ENCODE measurements at regions of chr3 and their contacts with region 1.

Region 1: DNA sequence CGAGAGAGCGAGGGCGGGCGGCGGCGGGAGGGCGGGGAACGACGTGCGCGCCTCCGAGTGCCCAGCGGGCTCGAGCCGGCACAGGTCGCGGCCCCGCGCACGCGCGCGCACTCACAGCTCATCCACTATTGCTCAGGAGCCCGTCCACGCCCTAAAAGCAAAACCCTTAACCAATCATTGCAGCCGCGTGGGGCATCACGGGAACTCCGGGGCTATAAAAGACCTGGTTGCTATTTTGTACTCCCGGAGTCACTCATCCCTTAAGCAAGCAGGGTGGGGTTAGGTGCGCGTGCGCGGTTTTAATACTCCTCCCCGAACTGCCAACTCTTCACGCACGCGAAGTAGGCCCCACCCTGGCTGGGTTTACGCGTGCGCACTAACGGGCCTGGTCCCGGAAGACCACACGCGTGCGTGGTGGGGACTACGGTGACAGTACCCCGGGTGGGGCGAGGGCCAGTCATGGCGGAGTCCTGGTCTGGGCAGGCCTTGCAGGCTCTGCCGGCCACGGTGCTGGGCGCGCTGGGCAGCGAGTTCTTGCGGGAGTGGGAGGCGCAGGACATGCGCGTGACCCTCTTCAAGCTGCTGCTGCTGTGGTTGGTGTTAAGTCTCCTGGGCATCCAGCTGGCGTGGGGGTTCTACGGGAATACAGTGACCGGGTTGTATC is at the starts of genes RHOA and TCTA:
- DNase-seq: peak; percentile 97 to 100 (median 100)
- H3K4me3 ChIP-seq: peak within 1 kb of the TSS; percentile 78 to 89
- H3K4me3 Mint-ChIP-seq: peak within 1 kb of the TSS; percentile 91 to 98 (median 94)
- H3K27ac ChIP-seq: peak within 1 kb of the TSS; percentile 93
- H3K27ac Mint-ChIP-seq: peak within 1 kb of the TSS; percentile 95 to 99 (median 97)
- H3K4me1 ChIP-seq: peaks cover 81% of the 10 kb centered on the region
- H3K4me1 Mint-ChIP-seq: peaks cover 51 to 82% (median 63%) of the 10 kb centered on the region in 4 donors
- H3K27me3 ChIP-seq: no peaks in the 10 kb centered on the region
- H3K27me3 Mint-ChIP-seq: no peaks in the 10 kb centered on the region
- total RNA-seq, gene RHOA: 246 to 269 TPM
- total RNA-seq, gene TCTA: 38.0 to 39.0 TPM

Region 2: GRCh38 chr3:48716982-48717746 is 694.9 kb before region 1 on chr3 and contains the start of gene IP6K2:
- CTCF ChIA-PET with region 1: no interaction called
- POLR2A ChIA-PET with region 1: no interaction called
- intact Hi-C with region 1: no loop called
- DNase-seq: peak; percentile 95 to 99 (median 97)
- H3K4me3 ChIP-seq: peak within 1 kb of the TSS; percentile 90 to 98
- H3K4me3 Mint-ChIP-seq: peak within 1 kb of the TSS; percentile 98 to 100 (median 99)
- H3K27ac ChIP-seq: peak within 1 kb of the TSS; percentile 91
- H3K27ac Mint-ChIP-seq: peak within 1 kb of the TSS; percentile 88 to 99 (median 99)
- H3K4me1 ChIP-seq: peaks cover 44% of the 10 kb centered on the region
- H3K4me1 Mint-ChIP-seq: peaks cover 28 to 51% (median 37%) of the 10 kb centered on the region in 4 donors
- H3K27me3 ChIP-seq: no peaks in the 10 kb centered on the region
- H3K27me3 Mint-ChIP-seq: no peaks in the 10 kb centered on the region
- total RNA-seq, gene IP6K2: 84.5 to 91.8 TPM

Region 3: DNA sequence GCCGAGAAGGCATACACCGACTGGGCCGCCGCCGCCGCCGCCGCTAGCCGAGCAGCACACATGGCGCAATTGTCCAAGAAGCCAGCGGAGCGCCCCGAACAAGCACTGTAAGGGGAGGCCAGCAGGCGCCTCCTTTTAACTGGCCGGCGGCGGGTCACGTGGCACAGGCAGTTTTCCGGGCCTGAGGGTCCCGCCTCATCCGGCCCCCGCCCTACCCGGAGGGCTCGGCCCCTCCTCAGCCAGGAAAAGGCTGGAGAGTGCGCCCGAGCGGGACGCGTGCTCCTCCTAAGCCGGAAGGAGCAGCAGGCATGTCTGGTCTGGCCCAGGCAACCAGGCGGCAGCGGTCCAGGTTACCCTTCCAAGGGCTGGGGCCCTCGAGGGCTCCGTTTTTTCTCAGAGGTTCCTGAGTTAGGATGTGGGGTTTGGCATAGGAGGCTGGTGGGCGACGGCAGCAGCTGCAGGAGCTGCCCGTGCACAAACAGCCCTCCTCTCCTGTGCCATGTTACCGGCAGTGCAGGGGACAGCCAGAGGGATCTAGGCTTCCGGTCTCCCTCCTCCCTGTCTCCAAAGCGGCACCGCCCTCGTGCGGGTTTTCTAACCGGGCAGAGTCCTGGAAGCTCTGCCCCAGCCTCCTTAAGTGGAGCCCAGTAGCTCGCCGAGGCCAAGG is 53.8 kb before region 1 on chr3 and contains the start of gene GPX1:
- CTCF ChIA-PET with region 1: interaction called, 3 read pairs
- POLR2A ChIA-PET with region 1: interaction called, 15 read pairs
- intact Hi-C with region 1: loop called (anchors 1 kb)
- DNase-seq: peak; percentile 60 to 80 (median 65)
- H3K4me3 ChIP-seq: peak within 1 kb of the TSS; percentile 78 to 87
- H3K4me3 Mint-ChIP-seq: peak within 1 kb of the TSS; percentile 91 to 97 (median 94)
- H3K27ac ChIP-seq: peak within 1 kb of the TSS; percentile 73
- H3K27ac Mint-ChIP-seq: peak within 1 kb of the TSS; percentile 93 to 98 (median 95)
- H3K4me1 ChIP-seq: peaks cover 26% of the 10 kb centered on the region
- H3K4me1 Mint-ChIP-seq: peaks cover 8 to 32% (median 20%) of the 10 kb centered on the region in 4 donors
- H3K27me3 ChIP-seq: no peaks in the 10 kb centered on the region
- H3K27me3 Mint-ChIP-seq: no peaks in the 10 kb centered on the region
- total RNA-seq, gene GPX1: 75.7 to 77.7 TPM

Region 4: DNA sequence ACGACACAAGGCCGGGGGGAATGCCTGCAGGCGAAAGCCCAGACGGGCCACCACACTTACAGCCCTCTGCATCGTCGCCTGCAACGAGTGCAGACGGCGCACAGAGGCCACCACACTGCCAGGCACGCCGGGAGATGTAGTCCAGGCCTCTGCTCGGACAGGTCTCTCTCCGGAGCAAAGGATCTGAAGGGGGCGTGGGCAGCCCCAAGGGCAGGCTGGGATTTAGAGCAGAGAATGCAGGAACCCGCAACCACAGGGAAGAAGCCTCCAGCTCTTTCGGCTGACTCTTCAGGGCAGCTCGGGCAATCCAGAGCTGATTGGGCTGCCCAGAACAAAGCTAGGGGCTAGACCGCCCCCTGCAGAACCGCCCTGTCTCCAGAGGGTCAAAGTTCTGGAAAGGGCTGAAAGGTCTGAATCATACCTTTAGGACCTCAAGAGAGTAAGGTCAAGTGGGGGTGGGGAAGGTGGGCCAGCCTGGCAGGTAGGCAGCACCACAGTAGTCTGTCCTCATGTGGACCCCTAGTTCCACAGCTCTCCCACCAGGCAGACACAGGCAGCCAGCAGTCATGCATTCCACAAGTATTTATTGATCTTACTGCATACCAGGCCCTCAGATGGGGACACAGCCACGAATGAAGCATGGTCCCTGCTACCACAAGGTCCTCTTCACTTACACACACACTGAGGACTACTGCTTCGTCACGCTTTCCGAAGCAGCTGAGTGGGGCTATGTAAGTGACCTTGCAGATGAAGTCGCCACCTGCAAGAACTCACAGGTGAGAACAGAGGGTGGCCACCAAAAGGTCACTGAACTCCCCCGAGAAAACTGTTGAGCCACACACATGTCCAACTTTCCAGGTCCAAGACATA is 10.5 kb after region 1 on chr3 and contains the start of gene AMT:
- CTCF ChIA-PET with region 1: interaction called, 9 read pairs
- POLR2A ChIA-PET with region 1: interaction called, 41 read pairs
- intact Hi-C with region 1: no loop called
- DNase-seq: no peak
- H3K4me3 ChIP-seq: no peak within 1 kb of the TSS
- H3K4me3 Mint-ChIP-seq: peak within 1 kb of the TSS in 1 of 8 donors; percentile 35
- H3K27ac ChIP-seq: no peak within 1 kb of the TSS
- H3K27ac Mint-ChIP-seq: peak within 1 kb of the TSS in 5 of 7 donors; percentile 29 to 83 (median 61)
- H3K4me1 ChIP-seq: peaks cover 13% of the 10 kb centered on the region
- H3K4me1 Mint-ChIP-seq: peaks cover 18 to 50% (median 33%) of the 10 kb centered on the region in 4 donors
- H3K27me3 ChIP-seq: no peaks in the 10 kb centered on the region
- H3K27me3 Mint-ChIP-seq: no peaks in the 10 kb centered on the region
- total RNA-seq, gene AMT: 6.4 to 7.6 TPM

Region 5: GRCh38 chr3:49445381-49445780 is 33.3 kb after region 1 on chr3:
- CTCF ChIA-PET with region 1: interaction called, 46 read pairs
- POLR2A ChIA-PET with region 1: interaction called, 27 read pairs
- intact Hi-C with region 1: loop called (anchors 1 kb)
- DNase-seq: no peak
- H3K4me3 ChIP-seq: no peak overlapping the region
- H3K4me3 Mint-ChIP-seq: no peak overlapping the region
- H3K27ac ChIP-seq: no peak overlapping the region
- H3K27ac Mint-ChIP-seq: peak overlapping the region in 4 of 7 donors; percentile 61 to 82 (median 72)
- H3K4me1 ChIP-seq: peaks cover 20% of the 10 kb centered on the region
- H3K4me1 Mint-ChIP-seq: peaks cover 8 to 18% (median 11%) of the 10 kb centered on the region in 4 donors
- H3K27me3 ChIP-seq: no peaks in the 10 kb centered on the region
- H3K27me3 Mint-ChIP-seq: no peaks in the 10 kb centered on the region

Region 6: DNA sequence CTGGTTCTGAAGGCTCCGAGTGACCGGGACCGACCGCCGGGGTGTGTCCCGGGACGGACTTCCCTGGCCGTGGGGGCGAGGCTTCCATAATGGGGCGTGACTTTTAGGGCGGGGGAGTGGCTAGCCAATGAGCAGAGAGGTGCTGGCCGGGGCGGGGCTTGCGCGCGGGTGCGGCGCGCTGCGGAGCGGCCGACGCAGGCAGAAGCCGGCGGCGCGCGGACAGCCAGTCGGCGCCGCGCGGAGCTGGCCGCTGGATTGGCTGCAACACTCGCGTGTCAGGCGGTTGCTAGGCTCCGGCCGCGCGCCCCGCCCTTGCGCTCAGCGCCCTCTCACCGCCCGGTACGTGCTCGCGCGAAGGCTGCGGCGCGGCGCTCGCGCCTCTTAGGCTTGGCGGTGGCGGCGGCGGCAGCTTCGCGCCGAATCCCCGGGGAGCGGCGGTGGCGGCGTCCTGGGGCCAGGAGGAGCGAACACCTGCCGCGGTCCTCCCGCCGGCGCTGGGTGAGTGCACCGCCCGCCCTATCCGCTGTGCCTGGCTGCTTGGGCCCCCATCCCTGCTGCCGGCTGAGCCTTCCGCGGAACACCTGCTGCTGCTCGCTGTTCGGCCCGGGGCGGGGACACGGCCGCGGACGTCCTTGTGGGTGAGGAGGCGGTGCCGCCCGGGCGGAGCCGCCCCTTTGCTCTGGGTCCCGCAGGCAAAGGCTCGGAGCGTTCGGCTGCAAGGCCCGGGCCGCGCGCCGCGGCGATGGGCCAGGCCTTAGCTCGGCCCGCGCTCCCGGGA is 58.0 kb after region 1 on chr3 and contains the start of gene DAG1:
- CTCF ChIA-PET with region 1: interaction called, 5 read pairs
- POLR2A ChIA-PET with region 1: interaction called, 24 read pairs
- intact Hi-C with region 1: loop called (anchors 1 kb)
- DNase-seq: peak; percentile 93 to 96 (median 95)
- H3K4me3 ChIP-seq: peak within 1 kb of the TSS; percentile 71 to 89
- H3K4me3 Mint-ChIP-seq: peak within 1 kb of the TSS; percentile 89 to 93 (median 91)
- H3K27ac ChIP-seq: peak within 1 kb of the TSS; percentile 87
- H3K27ac Mint-ChIP-seq: peak within 1 kb of the TSS; percentile 90 to 96 (median 95)
- H3K4me1 ChIP-seq: peaks cover 26% of the 10 kb centered on the region
- H3K4me1 Mint-ChIP-seq: peaks cover 15 to 28% (median 19%) of the 10 kb centered on the region in 4 donors
- H3K27me3 ChIP-seq: no peaks in the 10 kb centered on the region
- H3K27me3 Mint-ChIP-seq: no peaks in the 10 kb centered on the region
- total RNA-seq, gene DAG1: 15.3 to 18.0 TPM

Region 7: DNA sequence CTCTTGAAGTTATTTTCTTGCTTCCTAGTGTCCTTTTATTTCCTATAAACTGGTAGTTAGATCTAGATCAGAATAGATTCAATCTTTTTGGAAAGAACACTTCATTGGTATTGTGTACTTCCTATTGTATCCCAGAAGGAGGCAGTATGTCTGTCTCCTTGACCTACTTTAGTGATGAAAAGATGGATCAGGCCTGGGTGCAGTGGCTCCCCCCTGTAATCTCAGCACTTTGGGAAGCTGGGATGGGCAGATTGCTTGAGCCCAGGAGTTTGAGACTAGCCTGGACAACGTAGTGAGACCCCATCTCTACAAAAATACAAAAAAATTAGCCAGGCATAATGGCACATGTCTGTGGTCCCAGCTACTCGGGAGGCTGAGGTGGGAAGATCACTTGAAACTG is 154.2 kb after region 1 on chr3:
- CTCF ChIA-PET with region 1: no interaction called
- POLR2A ChIA-PET with region 1: no interaction called
- intact Hi-C with region 1: no loop called
- DNase-seq: no peak
- H3K4me3 ChIP-seq: no peak overlapping the region
- H3K4me3 Mint-ChIP-seq: no peak overlapping the region
- H3K27ac ChIP-seq: no peak overlapping the region
- H3K27ac Mint-ChIP-seq: no peak overlapping the region
- H3K4me1 ChIP-seq: no peaks in the 10 kb centered on the region
- H3K4me1 Mint-ChIP-seq: no peaks in the 10 kb centered on the region
- H3K27me3 ChIP-seq: no peaks in the 10 kb centered on the region
- H3K27me3 Mint-ChIP-seq: peaks cover 0 to 10% of the 10 kb centered on the region in 2 donors

Region 8: GRCh38 chr3:49929331-49930240 is 517.5 kb after region 1 on chr3 and contains the start of gene MON1A:
- CTCF ChIA-PET with region 1: no interaction called
- POLR2A ChIA-PET with region 1: no interaction called
- intact Hi-C with region 1: loop called (anchors 10 kb)
- DNase-seq: peak; percentile 76 to 87 (median 79)
- H3K4me3 ChIP-seq: peak within 1 kb of the TSS; percentile 95 to 98
- H3K4me3 Mint-ChIP-seq: peak within 1 kb of the TSS; percentile 81 to 88 (median 85)
- H3K27ac ChIP-seq: peak within 1 kb of the TSS; percentile 92
- H3K27ac Mint-ChIP-seq: peak within 1 kb of the TSS; percentile 76 to 94 (median 90)
- H3K4me1 ChIP-seq: peaks cover 23% of the 10 kb centered on the region
- H3K4me1 Mint-ChIP-seq: peaks cover 15 to 32% (median 26%) of the 10 kb centered on the region in 4 donors
- H3K27me3 ChIP-seq: no peaks in the 10 kb centered on the region
- H3K27me3 Mint-ChIP-seq: no peaks in the 10 kb centered on the region
- total RNA-seq, gene MON1A: 9.5 to 11.1 TPM